ENCODE measurements at regions of chr3 and their contacts with region 1.

Region 1: GRCh38 chr3:184250167-184250828 is 826 bp downstream of the EEF1AKMT4 start:
- DNase-seq: peak; percentile 85
- H3K4me3 Mint-ChIP-seq: peak overlapping the region; percentile 93
- H3K27ac Mint-ChIP-seq: peak overlapping the region; percentile 97
- H3K4me1 Mint-ChIP-seq: peaks cover 24% of the 10 kb centered on the region
- H3K27me3 Mint-ChIP-seq: no peaks in the 10 kb centered on the region

Region 2: GRCh38 chr3:184017672-184018423 is 232.4 kb before region 1 on chr3 and contains the start of gene ABCC5:
- intact Hi-C with region 1: loop called (anchors 1 kb)
- DNase-seq: peak; percentile 78
- H3K4me3 Mint-ChIP-seq: peak within 1 kb of the TSS; percentile 99
- H3K27ac Mint-ChIP-seq: peak within 1 kb of the TSS; percentile 85
- H3K4me1 Mint-ChIP-seq: peaks cover 30% of the 10 kb centered on the region
- H3K27me3 Mint-ChIP-seq: peaks cover 23% of the 10 kb centered on the region
- total RNA-seq, gene ABCC5: 18.0 and 18.7 TPM in 2 replicates

Region 3: DNA sequence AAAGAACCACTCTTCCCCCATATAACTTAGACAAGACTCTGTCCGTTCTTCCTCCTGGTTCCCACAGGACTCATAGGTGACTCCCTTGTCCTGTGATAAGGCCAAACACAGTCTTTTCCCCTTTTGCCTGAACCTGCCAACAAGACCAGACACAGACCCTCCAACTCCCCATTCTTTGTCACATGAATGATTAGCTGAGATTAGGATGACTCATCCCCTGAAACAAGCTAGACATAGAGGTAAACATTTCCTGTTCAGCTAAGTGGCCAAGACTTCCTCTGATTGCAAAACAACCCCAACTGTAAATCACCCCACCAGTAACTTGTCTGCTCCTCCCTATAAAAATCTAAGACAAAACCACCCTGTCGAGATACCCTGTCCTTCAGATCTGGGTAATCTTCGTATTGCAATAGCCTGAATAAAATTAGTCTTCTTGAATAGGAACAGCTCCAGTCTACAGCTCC is 164.9 kb before region 1 on chr3:
- intact Hi-C with region 1: no loop called
- DNase-seq: no peak
- H3K4me3 Mint-ChIP-seq: no peak overlapping the region
- H3K27ac Mint-ChIP-seq: no peak overlapping the region
- H3K4me1 Mint-ChIP-seq: peaks cover 8% of the 10 kb centered on the region
- H3K27me3 Mint-ChIP-seq: no peaks in the 10 kb centered on the region

Region 4: GRCh38 chr3:184154885-184155643 is 95.2 kb before region 1 on chr3 and contains the start of gene DVL3:
- intact Hi-C with region 1: loop called (anchors 1 kb)
- DNase-seq: peak; percentile 51
- H3K4me3 Mint-ChIP-seq: peak within 1 kb of the TSS; percentile 95
- H3K27ac Mint-ChIP-seq: peak within 1 kb of the TSS; percentile 88
- H3K4me1 Mint-ChIP-seq: peaks cover 20% of the 10 kb centered on the region
- H3K27me3 Mint-ChIP-seq: peaks cover 5% of the 10 kb centered on the region
- total RNA-seq, gene DVL3: 59.4 and 61.5 TPM in 2 replicates

Region 5: GRCh38 chr3:184229394-184230080 is 20.8 kb before region 1 on chr3 and contains the start of gene VWA5B2:
- intact Hi-C with region 1: loop called (anchors 1 kb)
- DNase-seq: peak; percentile 54
- H3K4me3 Mint-ChIP-seq: peak within 1 kb of the TSS; percentile 49
- H3K27ac Mint-ChIP-seq: no peak within 1 kb of the TSS
- H3K4me1 Mint-ChIP-seq: peaks cover 14% of the 10 kb centered on the region
- H3K27me3 Mint-ChIP-seq: peaks cover 52% of the 10 kb centered on the region
- total RNA-seq, gene VWA5B2: not detected in 2 replicates

Region 6: DNA sequence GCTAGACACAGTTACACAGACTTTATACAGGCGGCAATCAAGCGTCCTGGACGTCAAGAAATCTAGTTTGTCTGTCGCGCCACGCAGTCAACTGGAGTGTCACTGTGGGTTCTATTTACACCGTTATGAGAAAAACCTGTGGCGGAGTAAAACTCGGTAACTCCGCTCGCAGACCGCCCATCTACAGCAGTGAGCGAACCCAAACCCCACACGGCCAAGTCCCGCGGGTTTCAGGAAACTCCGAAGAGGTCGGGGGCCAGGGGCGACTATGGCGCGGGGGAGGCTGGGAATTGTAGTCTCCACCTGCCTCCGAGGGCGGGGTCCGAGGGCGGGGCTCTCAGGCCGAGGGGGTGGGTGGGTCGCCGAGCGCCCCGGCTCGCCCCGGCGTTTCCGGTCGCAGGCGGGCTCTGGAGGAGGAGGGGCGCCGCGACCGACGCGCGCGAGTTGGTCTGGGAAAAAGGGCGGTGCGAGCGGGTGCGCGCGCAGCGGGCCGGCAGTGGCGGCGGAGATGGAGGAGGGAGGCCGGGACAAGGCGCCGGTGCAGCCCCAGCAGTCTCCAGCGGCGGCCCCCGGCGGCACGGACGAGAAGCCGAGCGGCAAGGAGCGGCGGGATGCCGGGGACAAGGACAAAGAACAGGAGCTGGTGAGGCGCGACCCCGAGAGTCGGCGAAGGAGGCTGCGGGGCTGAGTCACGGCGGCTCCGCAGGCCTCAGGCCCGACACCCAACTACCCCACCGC is 48.6 kb after region 1 on chr3 and contains the start of gene PSMD2:
- intact Hi-C with region 1: loop called (anchors 1 kb)
- DNase-seq: peak; percentile 95
- H3K4me3 Mint-ChIP-seq: peak within 1 kb of the TSS; percentile 92
- H3K27ac Mint-ChIP-seq: peak within 1 kb of the TSS; percentile 85
- H3K4me1 Mint-ChIP-seq: peaks cover 23% of the 10 kb centered on the region
- H3K27me3 Mint-ChIP-seq: peaks cover 4% of the 10 kb centered on the region
- total RNA-seq, gene PSMD2: 251 and 255 TPM in 2 replicates

Region 7: DNA sequence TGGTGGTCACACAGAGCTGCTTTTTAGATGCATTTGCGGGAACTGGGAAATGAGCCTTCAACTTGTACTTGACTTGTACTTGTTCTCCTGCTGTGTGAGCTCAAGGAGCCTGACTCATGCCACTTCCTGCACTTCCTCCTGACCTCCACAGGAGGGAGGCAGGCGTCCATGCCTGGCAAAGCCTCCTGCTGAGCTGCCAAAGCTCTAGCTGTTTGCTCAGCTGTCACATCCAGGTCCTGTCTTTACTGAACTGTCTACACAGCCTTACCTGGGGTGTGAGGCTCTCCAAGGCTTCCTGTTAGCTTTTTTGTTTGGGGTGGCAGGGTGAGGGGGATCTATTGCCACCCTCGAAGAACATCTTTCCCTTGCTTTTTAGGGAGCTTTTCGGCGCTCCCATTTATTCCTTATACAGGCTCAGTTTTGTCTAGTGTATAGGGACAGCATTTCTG is 121.3 kb after region 1 on chr3:
- intact Hi-C with region 1: no loop called
- DNase-seq: peak; percentile 44
- H3K4me3 Mint-ChIP-seq: no peak overlapping the region
- H3K27ac Mint-ChIP-seq: no peak overlapping the region
- H3K4me1 Mint-ChIP-seq: peaks cover 11% of the 10 kb centered on the region
- H3K27me3 Mint-ChIP-seq: peaks cover 20% of the 10 kb centered on the region

Region 8: GRCh38 chr3:184811999-184812661 is 561.8 kb after region 1 on chr3 and contains the start of gene VPS8:
- intact Hi-C with region 1: loop called (anchors 10 kb)
- DNase-seq: peak; percentile 96
- H3K4me3 Mint-ChIP-seq: peak within 1 kb of the TSS; percentile 94
- H3K27ac Mint-ChIP-seq: peak within 1 kb of the TSS; percentile 95
- H3K4me1 Mint-ChIP-seq: peaks cover 74% of the 10 kb centered on the region
- H3K27me3 Mint-ChIP-seq: peaks cover 4% of the 10 kb centered on the region
- total RNA-seq, gene VPS8: 37.8 and 40.3 TPM in 2 replicates

Region 9: GRCh38 chr3:184927796-184928315 is 677.6 kb after region 1 on chr3:
- intact Hi-C with region 1: no loop called
- DNase-seq: no peak
- H3K4me3 Mint-ChIP-seq: no peak overlapping the region
- H3K27ac Mint-ChIP-seq: no peak overlapping the region
- H3K4me1 Mint-ChIP-seq: no peaks in the 10 kb centered on the region
- H3K27me3 Mint-ChIP-seq: no peaks in the 10 kb centered on the region